Right cardiac atrium (tissue), 5 donors: ENCODE measurements at regions of chr6 and their contacts with region 1.

Region 1: DNA sequence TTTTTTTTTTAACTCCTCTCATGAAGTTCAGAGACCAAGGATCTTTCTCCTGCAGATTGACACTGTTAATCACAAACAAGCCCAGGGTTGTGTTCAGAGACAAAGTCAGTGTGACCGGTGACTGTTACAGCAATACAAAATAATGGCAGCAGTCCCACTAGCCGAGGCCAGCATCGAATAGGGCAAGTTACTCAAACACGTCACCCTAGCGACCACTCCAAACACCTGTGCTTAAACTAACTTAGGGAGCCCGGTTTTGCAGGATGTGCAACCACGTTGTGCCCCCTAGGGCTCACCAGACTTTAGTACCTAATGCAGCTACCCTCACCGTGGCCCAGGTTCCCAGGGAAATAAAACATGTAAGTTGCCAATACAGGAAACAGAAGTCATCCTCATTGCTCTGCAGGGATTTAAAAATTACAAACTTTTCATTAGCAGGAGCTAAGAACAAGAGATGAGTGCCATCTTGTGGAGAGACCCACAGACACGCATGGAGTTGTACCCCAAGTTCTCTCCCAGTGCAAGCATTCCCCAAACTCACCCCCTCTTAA is 38.1 kb downstream of the FAM50B start:
- DNase-seq: no peak
- ATAC-seq: peak; percentile 45 to 52
- H3K4me3 ChIP-seq: no peak overlapping the region
- H3K27ac ChIP-seq: no peak overlapping the region
- H3K4me1 ChIP-seq: peaks cover 5% of the 10 kb centered on the region
- H3K27me3 ChIP-seq: no peaks in the 10 kb centered on the region

Region 2: GRCh38 chr6:3742426-3743344 is 144.5 kb before region 1 on chr6:
- intact Hi-C with region 1: loop called (anchors 2 to 10 kb)
- DNase-seq: peak; percentile 80 to 94 (median 92)
- ATAC-seq: peak; percentile 75 to 82
- H3K4me3 ChIP-seq: peak overlapping the region; percentile 11
- H3K27ac ChIP-seq: peak overlapping the region; percentile 75
- H3K4me1 ChIP-seq: peaks cover 5% of the 10 kb centered on the region
- H3K27me3 ChIP-seq: no peaks in the 10 kb centered on the region

Region 3: GRCh38 chr6:3751730-3752542 is 135.3 kb before region 1 on chr6:
- intact Hi-C with region 1: loop called in 2 of 4 experiments (anchors 5 to 10 kb)
- DNase-seq: peak; percentile 93 to 96 (median 96)
- ATAC-seq: peak; percentile 81 to 85
- H3K4me3 ChIP-seq: peak overlapping the region; percentile 51
- H3K27ac ChIP-seq: peak overlapping the region; percentile 86
- H3K4me1 ChIP-seq: peaks cover 3% of the 10 kb centered on the region
- H3K27me3 ChIP-seq: no peaks in the 10 kb centered on the region

Region 4: GRCh38 chr6:3929281-3929798 is 42.1 kb after region 1 on chr6:
- intact Hi-C with region 1: loop called in 2 of 4 experiments (anchors 5 kb)
- DNase-seq: peak in 1 of 3 donors; percentile 38
- ATAC-seq: peak in 1 of 2 donors; percentile 45
- H3K4me3 ChIP-seq: no peak overlapping the region
- H3K27ac ChIP-seq: no peak overlapping the region
- H3K4me1 ChIP-seq: no peaks in the 10 kb centered on the region
- H3K27me3 ChIP-seq: no peaks in the 10 kb centered on the region

Region 5: GRCh38 chr6:3939964-3940363 is 52.7 kb after region 1 on chr6:
- intact Hi-C with region 1: loop called in 1 of 4 experiments (anchors 5 kb)
- DNase-seq: peak in 1 of 3 donors; percentile 17
- ATAC-seq: peak; percentile 41 to 56
- H3K4me3 ChIP-seq: no peak overlapping the region
- H3K27ac ChIP-seq: no peak overlapping the region
- H3K4me1 ChIP-seq: no peaks in the 10 kb centered on the region
- H3K27me3 ChIP-seq: no peaks in the 10 kb centered on the region